ENCODE measurements at regions of chr3 and their contacts with region 1.

Region 1: DNA sequence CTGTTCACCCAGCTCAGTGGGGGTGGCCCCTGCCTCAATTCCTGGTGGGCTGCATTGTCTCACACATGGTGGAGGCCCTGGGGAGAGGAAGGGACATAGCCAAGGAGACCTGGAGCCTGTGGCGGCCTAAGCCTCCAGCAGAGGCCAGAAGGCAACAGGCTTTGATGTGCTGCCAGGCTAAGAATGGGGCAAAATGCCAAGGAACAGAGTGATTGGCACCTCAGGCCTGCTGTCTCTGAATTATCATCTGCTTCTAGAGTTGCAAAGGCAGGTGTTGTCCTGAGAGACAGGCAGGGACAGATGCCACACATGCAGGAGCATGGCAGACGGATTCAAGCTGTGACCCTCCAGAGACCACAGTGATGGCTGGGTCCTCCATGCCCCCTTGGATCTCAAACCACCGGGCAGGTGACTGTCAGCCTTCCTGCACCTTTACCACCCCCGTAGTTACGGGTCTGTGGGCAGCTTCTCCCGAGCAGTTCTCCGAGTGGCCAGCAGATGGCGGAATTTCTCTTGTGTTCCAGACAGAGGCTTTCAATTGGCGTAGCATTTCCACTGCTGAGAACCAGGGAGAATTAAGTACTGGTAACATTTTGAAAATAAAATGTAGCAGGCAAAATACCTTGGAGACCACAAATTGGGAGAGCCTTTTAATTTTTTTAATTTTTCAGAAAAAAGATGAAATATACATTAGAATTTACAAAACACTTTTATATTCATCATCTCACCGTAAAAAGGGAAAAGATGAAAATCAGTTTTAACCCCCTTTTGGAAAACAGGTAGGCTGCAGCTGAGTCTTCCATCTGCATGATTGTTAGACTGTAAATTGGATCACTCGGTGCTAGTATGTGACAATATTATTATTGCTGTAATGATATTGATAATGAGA is 525.5 kb upstream of the CFAP20DC start:
- DNase-seq: peak; percentile 73
- H3K4me3 ChIP-seq: peak overlapping the region in 1 of 2 experiments; percentile 45; a peak in 1 of 4 replicates
- H3K27ac ChIP-seq: no peak overlapping the region
- H3K4me1 ChIP-seq: peaks cover 5 to 6% of the 10 kb centered on the region in 2 experiments
- H3K27me3 ChIP-seq: no peaks in the 10 kb centered on the region
- CTCF ChIP-seq: peak; percentile 96
- EP300 ChIP-seq: no peak
- RAD21 ChIP-seq: peak; percentile 97

Region 2: DNA sequence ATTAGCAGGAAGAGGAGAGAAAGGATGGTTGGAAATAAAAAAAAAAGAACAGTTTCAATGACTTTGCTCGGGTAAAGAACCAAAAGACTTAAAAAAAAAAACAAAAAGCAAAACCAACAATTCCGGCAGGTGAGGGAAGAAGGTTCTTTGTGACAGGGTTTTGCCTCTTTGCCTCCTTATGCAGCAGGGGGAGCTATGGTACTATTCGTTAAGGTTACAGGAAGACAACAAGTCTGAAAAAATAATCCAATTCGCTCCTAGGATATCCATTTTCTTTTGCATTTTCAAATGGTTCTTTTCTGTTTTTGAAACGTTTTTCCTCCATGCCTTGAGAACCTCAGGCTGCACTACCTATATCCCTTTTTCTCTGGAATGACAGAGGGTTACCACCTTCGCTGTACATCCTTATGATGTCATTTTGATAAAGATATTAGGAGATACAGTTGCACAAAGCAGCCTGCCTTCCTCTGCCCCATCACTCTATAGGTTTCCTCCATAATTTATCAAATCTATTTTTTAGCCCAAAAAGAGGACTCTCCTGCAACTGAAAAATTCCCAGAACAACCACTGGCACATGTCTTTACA is 580.5 kb before region 1 on chr3:
- CTCF ChIA-PET with region 1: interaction called, 10 read pairs
- POLR2A ChIA-PET with region 1: no interaction called
- DNase-seq: peak; percentile 52
- H3K4me3 ChIP-seq: 0 out of 4 replicates have a peak overlapping the region, but pooled peaks of 1 of the 2 experiments have one; percentile 9
- H3K27ac ChIP-seq: 0 out of 4 replicates have a peak overlapping the region, but pooled peaks of 1 of the 2 experiments have one; percentile 30
- H3K4me1 ChIP-seq: peaks cover 2 to 26% of the 10 kb centered on the region in 2 experiments
- H3K27me3 ChIP-seq: no peaks in the 10 kb centered on the region
- CTCF ChIP-seq: peak; percentile 87
- EP300 ChIP-seq: no peak
- RAD21 ChIP-seq: peak; percentile 89

Region 3: GRCh38 chr3:59606638-59607262 is 31.4 kb after region 1 on chr3:
- CTCF ChIA-PET with region 1: interaction called, 10 read pairs
- POLR2A ChIA-PET with region 1: no interaction called
- DNase-seq: peak; percentile 17
- H3K4me3 ChIP-seq: no peak overlapping the region
- H3K27ac ChIP-seq: peak overlapping the region in 1 of 2 experiments; percentile 68; a peak in 2 of 4 replicates
- H3K4me1 ChIP-seq: peaks cover 0 to 23% of the 10 kb centered on the region in 2 experiments; a peak in 2 of 4 replicates
- H3K27me3 ChIP-seq: no peaks in the 10 kb centered on the region
- CTCF ChIP-seq: no peak
- EP300 ChIP-seq: peak in 1 of 2 experiments; percentile 71; a peak in 1 of 4 replicates
- RAD21 ChIP-seq: no peak

Region 4: GRCh38 chr3:59774634-59775033 is 199.3 kb after region 1 on chr3:
- CTCF ChIA-PET with region 1: interaction called, 10 read pairs
- POLR2A ChIA-PET with region 1: no interaction called
- DNase-seq: no peak
- H3K4me3 ChIP-seq: no peak overlapping the region
- H3K27ac ChIP-seq: peak overlapping the region in 1 of 2 experiments; percentile 67; a peak in 1 of 4 replicates
- H3K4me1 ChIP-seq: peaks cover 0 to 28% of the 10 kb centered on the region in 2 experiments; a peak in 2 of 4 replicates
- H3K27me3 ChIP-seq: no peaks in the 10 kb centered on the region
- CTCF ChIP-seq: no peak
- EP300 ChIP-seq: no peak
- RAD21 ChIP-seq: no peak

Region 5: GRCh38 chr3:59790241-59790640 is 214.9 kb after region 1 on chr3:
- CTCF ChIA-PET with region 1: no interaction called
- POLR2A ChIA-PET with region 1: no interaction called
- DNase-seq: no peak
- H3K4me3 ChIP-seq: no peak overlapping the region
- H3K27ac ChIP-seq: no peak overlapping the region
- H3K4me1 ChIP-seq: peaks cover 0 to 4% of the 10 kb centered on the region in 2 experiments; a peak in 1 of 4 replicates
- H3K27me3 ChIP-seq: no peaks in the 10 kb centered on the region
- CTCF ChIP-seq: no peak
- EP300 ChIP-seq: no peak
- RAD21 ChIP-seq: no peak

Region 6: GRCh38 chr3:59850417-59850816 is 275.1 kb after region 1 on chr3:
- CTCF ChIA-PET with region 1: interaction called, 114 read pairs
- POLR2A ChIA-PET with region 1: no interaction called
- DNase-seq: no peak
- H3K4me3 ChIP-seq: no peak overlapping the region
- H3K27ac ChIP-seq: no peak overlapping the region
- H3K4me1 ChIP-seq: no peaks in the 10 kb centered on the region
- H3K27me3 ChIP-seq: no peaks in the 10 kb centered on the region
- CTCF ChIP-seq: no peak
- EP300 ChIP-seq: no peak
- RAD21 ChIP-seq: no peak

Region 7: DNA sequence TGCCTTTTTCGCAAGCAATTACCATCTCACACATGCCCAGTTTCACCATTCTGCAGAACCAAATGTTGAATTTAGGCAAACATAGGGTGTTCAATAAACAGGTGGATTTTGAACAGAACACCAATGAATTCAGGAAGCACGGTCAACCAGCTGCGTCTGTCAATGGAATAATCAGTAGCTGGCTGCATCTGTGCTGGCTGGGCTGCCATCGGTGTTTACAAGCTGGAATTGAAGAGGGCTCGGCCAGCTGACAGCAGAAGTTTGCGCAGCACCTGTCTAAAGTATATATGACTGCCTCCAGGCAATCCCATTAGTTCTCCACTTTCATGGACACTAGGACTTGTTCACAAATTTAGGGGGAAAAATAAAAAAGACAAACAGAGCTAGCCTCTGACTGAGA is 470.9 kb after region 1 on chr3:
- CTCF ChIA-PET with region 1: no interaction called
- POLR2A ChIA-PET with region 1: no interaction called
- DNase-seq: no peak
- H3K4me3 ChIP-seq: no peak overlapping the region
- H3K27ac ChIP-seq: no peak overlapping the region
- H3K4me1 ChIP-seq: no peaks in the 10 kb centered on the region
- H3K27me3 ChIP-seq: no peaks in the 10 kb centered on the region
- CTCF ChIP-seq: no peak
- EP300 ChIP-seq: no peak
- RAD21 ChIP-seq: no peak